Activated T-helper 1 cell treated with anti-CD3 and anti-CD28 coated beads, Interleukin-12 subunit alpha, Interleukin-12 subunit beta, Interleukin-2, Interleukin-4 antibody, amounts not matched to agents 30 ng/mL and 10 ng/mL and 1 ng/mL, durations not matched to agents 14 hours and 24 hours and 36 hours (primary cell): ENCODE measurements at regions of chr15 and their contacts with region 1.

Region 1: GRCh38 chr15:73950831-73951561 is 24.7 kb downstream of the LOXL1 start:
- DNase-seq: peak; percentile 56
- H3K4me3 Mint-ChIP-seq: no peak overlapping the region
- H3K27ac Mint-ChIP-seq: no peak overlapping the region
- H3K4me1 Mint-ChIP-seq: peaks cover 5% of the 10 kb centered on the region
- H3K27me3 Mint-ChIP-seq: peaks cover 3% of the 10 kb centered on the region

Region 2: GRCh38 chr15:73964736-73965093 is 13.7 kb after region 1 on chr15:
- intact Hi-C with region 1: loop called (anchors 1 kb)
- DNase-seq: peak; percentile 77
- H3K4me3 Mint-ChIP-seq: peak overlapping the region; percentile 73
- H3K27ac Mint-ChIP-seq: peak overlapping the region; percentile 87
- H3K4me1 Mint-ChIP-seq: peaks cover 37% of the 10 kb centered on the region
- H3K27me3 Mint-ChIP-seq: no peaks in the 10 kb centered on the region